HCT116 (cell line): ENCODE measurements at regions of chr1 and their contacts with region 1.

Region 1: DNA sequence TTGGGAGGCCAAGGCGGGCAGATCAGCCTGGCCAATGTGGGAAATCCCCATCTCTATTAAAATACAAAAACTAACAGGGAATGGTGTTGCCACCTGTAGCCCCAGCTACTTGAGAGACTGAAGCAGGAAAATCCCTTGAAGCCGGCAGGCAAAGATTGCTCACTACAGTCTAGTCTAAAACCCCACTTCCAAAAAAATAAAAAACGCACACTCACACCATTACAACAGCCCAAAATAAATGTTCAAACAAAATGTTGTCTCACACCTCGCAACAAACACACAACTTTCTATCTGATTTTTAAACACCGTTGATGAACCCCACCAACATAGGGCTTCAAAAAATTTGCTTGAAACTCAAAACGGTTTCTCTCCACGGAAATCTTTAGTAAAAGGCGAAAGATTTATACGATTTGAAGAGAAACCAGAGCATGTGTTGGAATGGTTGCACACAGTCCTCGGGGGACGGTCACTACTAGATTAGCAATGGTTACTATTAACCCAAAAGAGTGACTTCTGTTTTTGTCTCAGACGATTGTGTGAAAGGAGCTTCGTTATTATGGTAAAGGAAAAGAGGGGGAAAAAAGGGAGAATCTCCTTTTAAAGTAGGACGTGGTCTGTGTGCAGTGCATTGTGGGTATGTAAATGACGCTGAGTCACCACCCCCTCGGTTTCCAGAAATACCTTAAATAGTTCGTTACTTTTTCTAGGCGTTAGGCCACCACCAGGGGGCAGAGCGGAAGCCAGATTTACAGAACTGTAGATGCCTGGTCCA is at the start of gene RNU5D-1:
- DNase-seq: peak; percentile 98
- ATAC-seq: peak; percentile 77
- H3K4me3 ChIP-seq: peak within 1 kb of the TSS in 1 of 2 experiments; percentile 3; a peak in 1 of 4 replicates
- H3K27ac ChIP-seq: peak within 1 kb of the TSS; percentile 86
- H3K4me1 ChIP-seq: peaks cover 34 to 70% of the 10 kb centered on the region in 2 experiments
- H3K27me3 ChIP-seq: no peaks in the 10 kb centered on the region
- CTCF ChIP-seq: peak; percentile 47 to 82 (median 75); a peak in 5 of 6 replicates
- POLR2A ChIP-seq: peak; percentile 100
- RAD21 ChIP-seq: peak; percentile 44
- total RNA-seq, gene RNU5D-1: not detected

Region 2: GRCh38 chr1:44775078-44775929 is 44.4 kb after region 1 on chr1 and contains the start of gene RPS8:
- CTCF ChIA-PET with region 1: interaction called, 4 read pairs
- POLR2A ChIA-PET with region 1: interaction called, 39 read pairs
- RAD21 ChIA-PET with region 1: no interaction called
- intact Hi-C with region 1: loop called (anchors 1 kb)
- DNase-seq: peak; percentile 85
- ATAC-seq: peak; percentile 76
- H3K4me3 ChIP-seq: peak within 1 kb of the TSS; percentile 92 to 99
- H3K27ac ChIP-seq: peak within 1 kb of the TSS; percentile 86
- H3K4me1 ChIP-seq: peaks cover 10 to 24% of the 10 kb centered on the region in 2 experiments
- H3K27me3 ChIP-seq: no peaks in the 10 kb centered on the region
- CTCF ChIP-seq: no peak
- POLR2A ChIP-seq: peak; percentile 97
- RAD21 ChIP-seq: no peak
- total RNA-seq, gene RPS8: 2,296 TPM

Region 3: DNA sequence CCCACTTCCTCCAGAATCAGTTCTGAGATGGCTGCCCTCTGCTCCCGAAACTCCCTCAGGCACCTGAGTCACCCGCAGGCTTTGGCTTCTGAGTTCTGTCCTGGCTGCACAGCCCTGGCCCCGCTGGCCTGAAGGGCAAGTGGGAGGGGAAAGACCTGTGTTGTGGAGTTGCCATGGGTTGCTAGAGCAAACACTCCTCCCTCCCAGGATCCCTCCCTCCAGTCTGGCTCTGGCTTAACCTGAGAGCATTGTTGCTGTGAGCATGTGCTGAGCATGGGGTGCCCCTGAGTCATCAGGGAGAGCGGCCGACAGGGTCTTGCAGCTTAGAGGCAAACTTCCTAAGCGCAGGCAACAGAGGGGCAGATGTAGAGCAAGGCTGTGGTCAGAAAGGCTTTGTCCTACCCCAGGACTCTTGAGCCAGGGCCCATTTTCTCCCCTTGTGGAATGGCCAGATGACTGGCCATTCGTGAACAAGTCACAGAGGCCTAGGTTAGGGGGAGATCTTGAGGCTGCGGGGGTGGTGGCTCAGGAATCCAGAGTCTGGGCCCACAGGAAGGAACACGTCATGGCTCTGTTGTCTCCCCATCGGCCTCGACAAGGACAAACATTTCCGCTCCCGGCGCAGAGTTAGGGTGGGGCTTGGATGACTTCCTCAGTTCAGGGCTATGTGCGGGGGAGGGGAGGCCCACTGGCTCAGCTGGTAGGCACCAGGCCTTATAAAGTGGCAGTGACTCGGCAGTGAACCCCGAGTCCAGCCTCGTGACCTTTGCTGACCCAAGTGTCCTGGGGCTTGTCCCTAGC is 76.5 kb after region 1 on chr1 and contains the start of gene DYNLT4:
- CTCF ChIA-PET with region 1: no interaction called
- POLR2A ChIA-PET with region 1: interaction called, 27 read pairs
- RAD21 ChIA-PET with region 1: no interaction called
- intact Hi-C with region 1: no loop called
- DNase-seq: peak; percentile 98
- ATAC-seq: peak; percentile 74
- H3K4me3 ChIP-seq: peak within 1 kb of the TSS; percentile 30 to 32
- H3K27ac ChIP-seq: peak within 1 kb of the TSS; percentile 98
- H3K4me1 ChIP-seq: peaks cover 58 to 96% of the 10 kb centered on the region in 2 experiments
- H3K27me3 ChIP-seq: no peaks in the 10 kb centered on the region
- CTCF ChIP-seq: no peak
- POLR2A ChIP-seq: peak; percentile 58
- RAD21 ChIP-seq: no peak
- total RNA-seq, gene DYNLT4: 0.96 TPM

Region 4: GRCh38 chr1:45303582-45304310 is 572.8 kb after region 1 on chr1:
- CTCF ChIA-PET with region 1: interaction called, 7 read pairs
- POLR2A ChIA-PET with region 1: interaction called, 5 read pairs
- RAD21 ChIA-PET with region 1: no interaction called
- intact Hi-C with region 1: loop called (anchors 5 kb)
- DNase-seq: peak; percentile 94
- ATAC-seq: peak; percentile 89
- H3K4me3 ChIP-seq: peak overlapping the region; percentile 69 to 70
- H3K27ac ChIP-seq: peak overlapping the region; percentile 82
- H3K4me1 ChIP-seq: peaks cover 12 to 41% of the 10 kb centered on the region in 2 experiments
- H3K27me3 ChIP-seq: no peaks in the 10 kb centered on the region
- CTCF ChIP-seq: peak; percentile 52 to 95 (median 58)
- POLR2A ChIP-seq: peak; percentile 61
- RAD21 ChIP-seq: peak; percentile 83